Left cardiac atrium (tissue), 4 donors: ENCODE measurements at regions of chr16 and their contacts with region 1.

Region 1: DNA sequence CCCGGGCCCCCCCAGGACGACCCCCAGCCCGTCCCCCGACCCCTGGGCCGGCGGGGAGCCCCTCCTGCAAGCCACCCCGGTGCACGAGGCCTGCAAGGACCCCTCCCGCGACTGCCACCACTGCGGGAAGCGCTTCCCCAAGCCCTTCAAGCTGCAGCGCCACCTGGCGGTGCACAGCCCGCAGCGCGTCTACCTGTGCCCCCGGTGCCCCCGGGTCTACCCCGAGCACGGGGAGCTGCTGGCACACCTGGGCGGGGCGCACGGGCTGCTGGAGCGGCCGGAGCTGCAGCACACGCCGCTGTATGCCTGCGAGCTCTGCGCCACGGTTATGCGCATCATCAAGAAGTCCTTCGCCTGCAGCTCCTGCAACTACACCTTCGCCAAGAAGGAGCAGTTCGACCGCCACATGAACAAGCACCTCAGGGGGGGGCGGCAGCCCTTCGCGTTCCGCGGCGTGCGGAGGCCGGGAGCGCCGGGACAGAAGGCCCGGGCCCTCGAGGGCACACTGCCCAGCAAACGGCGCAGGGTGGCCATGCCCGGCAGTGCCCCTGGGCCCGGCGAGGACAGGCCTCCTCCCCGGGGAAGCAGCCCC is 15.6 kb upstream of the ZFPM1 start:
- DNase-seq: no peak
- ATAC-seq: peak; percentile 26 to 48

Region 2: GRCh38 chr16:87982491-87983415 is 454.7 kb before region 1 on chr16:
- intact Hi-C with region 1: loop called in 1 of 2 experiments (anchors 10 kb)
- DNase-seq: no peak
- ATAC-seq: peak in 1 of 2 donors; percentile 17

Region 3: DNA sequence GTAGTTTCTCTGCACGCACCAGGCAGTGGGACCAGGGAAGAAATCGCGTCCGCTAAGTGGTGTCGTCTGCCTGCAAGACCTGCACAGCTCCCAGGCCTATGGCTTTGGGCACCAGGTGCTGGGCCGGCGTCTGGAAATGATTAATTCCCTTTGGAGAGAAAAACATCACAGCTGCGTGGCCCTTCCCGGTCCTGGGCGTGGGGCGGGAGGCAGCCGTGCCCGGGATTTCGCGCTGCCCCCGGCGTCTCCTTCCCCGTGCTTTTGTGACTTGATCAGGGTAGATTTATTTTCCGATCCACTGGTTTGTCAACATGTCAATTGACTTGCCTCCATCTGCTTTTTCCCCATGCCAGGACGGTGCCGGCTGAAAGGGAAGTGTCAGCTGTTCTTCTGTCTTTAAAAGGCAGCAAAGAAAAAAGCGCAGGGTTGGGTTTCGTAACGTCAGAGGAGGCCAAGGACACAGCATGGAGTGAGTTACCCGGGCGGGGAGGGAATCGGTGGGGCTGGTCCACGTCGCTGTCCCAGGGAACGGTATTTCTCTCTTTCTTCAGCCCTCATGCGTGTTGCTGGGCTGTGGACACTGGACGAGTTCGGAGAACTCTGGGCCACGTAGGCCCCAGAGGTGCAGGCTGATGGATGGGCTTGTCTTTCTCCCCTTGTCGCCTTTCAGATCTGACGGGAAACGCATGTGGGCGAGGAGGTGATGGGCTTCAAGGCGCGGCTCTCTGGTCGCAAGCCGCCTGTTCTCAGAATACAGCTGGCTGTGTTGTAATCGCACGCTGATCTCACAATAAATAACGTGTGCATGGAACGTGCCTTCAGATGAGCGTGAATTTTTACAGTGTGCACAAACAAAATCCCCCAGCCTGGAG is 242.8 kb before region 1 on chr16:
- intact Hi-C with region 1: loop called (anchors 5 kb)
- DNase-seq: no peak
- ATAC-seq: peak in 1 of 2 donors; percentile 13

Region 4: DNA sequence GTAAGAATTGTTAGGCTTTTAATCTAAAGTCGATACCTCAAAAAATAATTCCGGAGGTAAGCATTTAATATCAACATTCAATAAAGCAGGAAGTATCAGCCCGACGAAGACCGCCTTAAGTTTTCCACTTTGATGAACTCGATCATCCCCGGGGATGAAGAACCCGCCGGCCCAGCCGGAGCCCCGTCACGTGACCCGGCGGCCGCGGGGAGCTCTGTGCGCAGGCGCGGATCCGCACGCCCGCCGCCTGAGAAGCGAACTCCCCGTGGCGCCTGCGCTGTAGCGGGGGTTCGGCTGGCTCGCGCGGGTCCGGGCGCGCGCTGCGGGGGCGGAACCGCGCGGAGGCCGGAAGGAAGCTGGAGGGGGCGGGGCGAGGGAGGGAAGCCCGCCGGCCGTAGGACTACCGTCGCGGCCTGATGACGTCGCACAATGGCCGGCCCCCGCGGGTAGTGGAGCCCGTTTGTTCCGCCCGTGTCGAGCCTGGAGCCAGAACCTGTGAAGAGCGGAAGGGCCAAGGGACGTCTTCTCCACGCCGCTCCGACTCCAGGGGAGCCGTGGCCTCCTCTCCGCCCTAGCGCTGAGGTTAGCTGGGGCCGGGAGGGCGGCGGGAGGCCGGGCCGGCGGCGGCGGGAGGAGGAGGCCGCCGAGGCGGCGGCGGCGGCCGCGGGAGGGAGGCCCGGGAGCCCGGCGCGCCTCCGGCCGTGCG is 132.7 kb after region 1 on chr16 and contains the start of gene ZC3H18:
- intact Hi-C with region 1: no loop called
- DNase-seq: peak; percentile 97
- ATAC-seq: peak; percentile 98 to 99
- total RNA-seq, gene ZC3H18: 23.1 to 25.3 TPM